GM13977 (cell line): ENCODE measurements at regions of chr15 and their contacts with region 1.

Region 1: DNA sequence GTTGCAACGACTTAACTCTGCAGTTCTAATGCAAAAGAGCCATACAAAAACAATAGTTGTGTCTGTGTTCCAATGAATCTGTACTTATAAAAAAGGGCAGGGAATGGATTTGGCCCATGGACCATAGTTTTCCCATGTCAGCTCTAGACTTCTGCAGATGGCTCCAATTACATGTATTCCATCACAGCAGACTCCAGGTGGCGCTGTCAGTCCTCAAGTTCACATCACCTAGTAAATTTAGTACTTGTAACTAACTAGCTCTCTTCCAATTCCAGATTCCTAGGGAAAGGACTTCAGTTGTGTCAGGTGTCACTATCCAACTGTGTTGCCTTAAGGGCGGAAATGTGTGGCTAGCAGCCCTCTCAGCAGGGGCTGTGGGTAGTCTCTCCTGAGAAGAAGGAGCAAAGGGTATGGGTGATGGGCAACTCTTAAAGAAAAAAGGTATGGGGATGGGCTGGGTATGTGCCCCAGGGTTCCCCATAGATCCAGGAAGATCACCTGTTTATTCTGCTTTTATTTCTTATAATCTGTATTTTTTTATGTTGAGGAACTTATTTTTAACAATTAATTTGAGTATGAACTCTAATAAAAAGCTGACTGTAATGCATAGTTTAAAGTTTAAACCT is 36.2 kb downstream of the BBS4 start:
- DNase-seq: peak; percentile 41
- CTCF ChIP-seq: peak; percentile 80

Region 2: DNA sequence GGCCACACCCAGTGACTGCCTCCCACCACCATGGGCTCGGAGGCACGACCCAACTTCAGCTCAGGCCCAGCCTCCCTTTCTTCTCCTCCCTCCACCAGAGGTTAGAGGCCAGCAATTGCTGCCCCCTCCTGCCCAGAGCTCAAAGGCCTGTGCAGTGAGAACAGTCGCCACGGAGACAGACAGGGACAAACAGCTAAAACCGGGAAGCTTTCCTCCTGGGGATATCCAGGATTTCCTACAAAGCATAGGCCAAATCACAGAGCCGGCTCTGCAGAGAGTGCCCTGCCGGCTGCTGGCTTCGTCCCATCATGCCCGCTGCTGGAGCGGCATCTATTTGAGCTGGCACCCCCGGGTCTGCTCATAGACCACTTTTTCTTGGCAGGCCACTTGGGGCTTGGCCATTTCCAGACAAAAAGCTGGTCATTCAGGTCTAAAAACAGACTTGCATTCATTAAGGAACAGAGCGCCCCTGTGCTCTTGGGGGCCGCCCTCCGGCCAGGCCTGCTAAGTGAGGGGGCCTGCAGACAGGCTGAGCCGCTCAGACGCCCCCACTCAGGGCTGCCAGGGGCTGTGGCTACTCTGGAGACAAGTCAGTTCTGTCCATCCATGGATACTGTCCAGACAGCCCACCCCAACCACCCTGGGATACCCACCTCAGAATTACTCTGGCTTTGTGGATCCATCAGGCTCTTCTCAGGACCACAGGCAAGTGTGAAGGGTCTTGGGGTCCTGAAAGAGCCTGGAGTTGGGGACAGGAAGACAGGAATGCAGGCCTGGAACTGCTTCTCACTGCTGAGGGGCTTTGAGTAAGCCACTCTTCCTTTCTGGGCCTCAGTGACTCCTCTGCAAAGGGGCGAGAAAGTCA is 542.0 kb before region 1 on chr15:
- in situ Hi-C with region 1: no loop called
- DNase-seq: no peak
- CTCF ChIP-seq: no peak

Region 3: GRCh38 chr15:72770673-72771328 is 48.6 kb after region 1 on chr15:
- in situ Hi-C with region 1: loop called (anchors 10 kb)
- DNase-seq: peak; percentile 18
- CTCF ChIP-seq: peak; percentile 26

Region 4: DNA sequence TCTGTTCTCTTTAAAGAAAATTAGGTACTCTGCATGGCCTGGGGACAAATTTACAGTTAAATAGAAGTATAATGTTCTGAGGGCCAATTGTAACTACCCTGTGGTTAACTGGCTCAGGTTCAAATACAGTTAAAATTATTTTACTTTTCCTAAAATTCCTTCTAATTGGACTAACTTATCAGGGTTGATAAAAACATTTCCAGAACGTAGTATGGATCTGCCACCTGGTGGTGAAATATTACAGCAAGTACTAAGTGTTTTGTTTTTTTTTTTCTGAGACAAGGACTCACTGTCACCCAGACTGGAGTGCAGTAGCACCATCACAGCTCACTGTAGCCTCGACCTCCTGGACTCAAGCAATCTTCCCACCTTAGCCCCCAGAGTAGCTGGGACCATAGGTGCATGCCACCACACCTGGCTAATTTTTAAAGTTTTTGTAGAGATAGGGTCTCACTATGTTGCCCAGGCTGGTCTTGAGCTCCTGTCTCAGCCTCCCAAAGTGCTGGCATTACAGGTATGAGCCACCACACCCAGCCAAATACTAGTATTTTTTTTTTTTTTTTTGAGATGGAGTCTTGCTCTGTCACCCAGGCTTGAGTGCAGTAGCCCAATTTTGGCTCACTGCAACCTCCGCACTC is 359.3 kb after region 1 on chr15:
- in situ Hi-C with region 1: loop called (anchors 25 kb)
- DNase-seq: no peak
- CTCF ChIP-seq: peak; percentile 50

Region 5: GRCh38 chr15:73240866-73241499 is 518.8 kb after region 1 on chr15:
- in situ Hi-C with region 1: loop called (anchors 25 kb)
- DNase-seq: peak; percentile 48
- CTCF ChIP-seq: peak; percentile 82